ENCODE measurements at regions of chr12 and their contacts with region 1.

Region 1: GRCh38 chr12:38921025-38921677 is 15.8 kb upstream of the CPNE8 start:
- DNase-seq: peak; percentile 77
- H3K4me3 ChIP-seq: no peak overlapping the region
- H3K27ac ChIP-seq: no peak overlapping the region
- H3K4me1 ChIP-seq: no peaks in the 10 kb centered on the region
- H3K27me3 ChIP-seq: no peaks in the 10 kb centered on the region
- CTCF ChIP-seq: peak; percentile 69

Region 2: DNA sequence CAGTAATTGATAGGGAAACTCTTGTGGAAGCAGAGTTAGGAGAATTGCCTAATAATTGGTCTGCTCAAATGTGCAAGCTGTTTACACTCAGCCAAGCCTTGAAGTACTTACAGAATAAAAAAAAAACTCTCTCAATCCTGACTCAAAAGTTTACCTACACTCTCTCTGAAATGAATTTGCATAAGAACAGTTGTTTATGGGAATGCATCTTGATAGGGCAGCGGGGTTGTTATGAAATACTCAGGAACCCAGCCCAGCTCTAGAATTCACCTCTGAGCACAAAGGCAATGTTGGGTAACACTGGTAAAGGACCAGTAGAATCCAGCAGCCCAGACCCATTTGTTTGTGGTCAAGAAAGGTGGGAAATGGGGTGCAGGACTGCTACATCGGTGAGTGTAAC is 282.7 kb before region 1 on chr12:
- CTCF ChIA-PET with region 1: no interaction called
- POLR2A ChIA-PET with region 1: no interaction called
- intact Hi-C with region 1: no loop called
- DNase-seq: no peak
- H3K4me3 ChIP-seq: no peak overlapping the region
- H3K27ac ChIP-seq: no peak overlapping the region
- H3K4me1 ChIP-seq: no peaks in the 10 kb centered on the region
- H3K27me3 ChIP-seq: no peaks in the 10 kb centered on the region
- CTCF ChIP-seq: no peak

Region 3: GRCh38 chr12:39036105-39036504 is 115.0 kb after region 1 on chr12:
- CTCF ChIA-PET with region 1: no interaction called
- POLR2A ChIA-PET with region 1: interaction called, 12 read pairs
- intact Hi-C with region 1: no loop called
- DNase-seq: no peak
- H3K4me3 ChIP-seq: no peak overlapping the region
- H3K27ac ChIP-seq: no peak overlapping the region
- H3K4me1 ChIP-seq: peaks cover 4% of the 10 kb centered on the region
- H3K27me3 ChIP-seq: no peaks in the 10 kb centered on the region
- CTCF ChIP-seq: no peak

Region 4: GRCh38 chr12:39272871-39273770 is 352.0 kb after region 1 on chr12:
- CTCF ChIA-PET with region 1: interaction called, 15 read pairs
- POLR2A ChIA-PET with region 1: no interaction called
- intact Hi-C with region 1: loop called (anchors 2 kb)
- DNase-seq: peak; percentile 77
- H3K4me3 ChIP-seq: no peak overlapping the region
- H3K27ac ChIP-seq: no peak overlapping the region
- H3K4me1 ChIP-seq: peaks cover 25% of the 10 kb centered on the region
- H3K27me3 ChIP-seq: no peaks in the 10 kb centered on the region
- CTCF ChIP-seq: peak; percentile 80